Activated CD4-positive, alpha-beta T cell treated with anti-CD3 and anti-CD28 coated beads, Interleukin-2, amount 10 ng/mL, durations not matched to agents 24 days and 14 days (primary cell): ENCODE measurements at regions of chr1 and their contacts with region 1.

Region 1: GRCh38 chr1:24970399-24970753 is 40.3 kb upstream of the RUNX3 start:
- DNase-seq: no peak
- H3K4me3 Mint-ChIP-seq: peak overlapping the region; percentile 30
- H3K27ac Mint-ChIP-seq: peak overlapping the region; percentile 68
- H3K4me1 Mint-ChIP-seq: peaks cover 74% of the 10 kb centered on the region
- H3K27me3 Mint-ChIP-seq: no peaks in the 10 kb centered on the region

Region 2: DNA sequence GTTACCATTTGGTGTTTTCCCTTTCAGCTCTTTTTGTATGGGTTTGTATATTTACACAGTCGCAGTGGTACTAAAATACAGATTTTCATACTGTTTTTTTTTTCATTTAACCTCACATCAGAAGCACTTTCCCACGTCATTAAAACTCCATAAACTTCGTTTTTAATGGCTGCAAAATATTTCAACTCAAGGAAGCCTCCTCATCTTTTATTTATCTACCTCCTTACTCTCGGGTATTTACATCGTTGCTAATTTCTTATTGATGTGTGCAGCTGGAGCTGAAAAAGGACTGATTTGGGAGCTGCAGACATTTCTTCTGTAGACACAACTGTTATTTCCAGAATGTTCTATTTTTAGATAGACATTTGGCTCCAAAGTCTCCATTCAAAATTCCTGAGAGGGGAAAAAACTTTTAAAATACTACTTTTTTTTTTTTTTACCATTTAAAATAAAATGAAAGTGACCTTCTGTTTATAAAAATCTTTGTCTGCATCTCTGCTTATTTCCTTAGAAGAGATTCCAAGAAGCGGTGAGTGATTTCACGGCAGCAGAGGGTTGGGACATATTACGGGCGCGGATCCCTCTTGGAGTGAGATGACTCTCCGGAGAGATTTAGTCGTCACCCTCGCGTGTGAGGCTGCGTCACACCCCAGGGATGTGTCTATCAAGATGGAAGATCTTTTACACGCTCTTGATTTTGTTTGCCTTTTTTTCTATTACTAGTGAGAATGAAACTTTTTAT is 50.4 kb before region 1 on chr1:
- intact Hi-C with region 1: no loop called
- DNase-seq: no peak
- H3K4me3 Mint-ChIP-seq: no peak overlapping the region
- H3K27ac Mint-ChIP-seq: peak overlapping the region; percentile 60
- H3K4me1 Mint-ChIP-seq: peaks cover 40% of the 10 kb centered on the region
- H3K27me3 Mint-ChIP-seq: no peaks in the 10 kb centered on the region

Region 3: DNA sequence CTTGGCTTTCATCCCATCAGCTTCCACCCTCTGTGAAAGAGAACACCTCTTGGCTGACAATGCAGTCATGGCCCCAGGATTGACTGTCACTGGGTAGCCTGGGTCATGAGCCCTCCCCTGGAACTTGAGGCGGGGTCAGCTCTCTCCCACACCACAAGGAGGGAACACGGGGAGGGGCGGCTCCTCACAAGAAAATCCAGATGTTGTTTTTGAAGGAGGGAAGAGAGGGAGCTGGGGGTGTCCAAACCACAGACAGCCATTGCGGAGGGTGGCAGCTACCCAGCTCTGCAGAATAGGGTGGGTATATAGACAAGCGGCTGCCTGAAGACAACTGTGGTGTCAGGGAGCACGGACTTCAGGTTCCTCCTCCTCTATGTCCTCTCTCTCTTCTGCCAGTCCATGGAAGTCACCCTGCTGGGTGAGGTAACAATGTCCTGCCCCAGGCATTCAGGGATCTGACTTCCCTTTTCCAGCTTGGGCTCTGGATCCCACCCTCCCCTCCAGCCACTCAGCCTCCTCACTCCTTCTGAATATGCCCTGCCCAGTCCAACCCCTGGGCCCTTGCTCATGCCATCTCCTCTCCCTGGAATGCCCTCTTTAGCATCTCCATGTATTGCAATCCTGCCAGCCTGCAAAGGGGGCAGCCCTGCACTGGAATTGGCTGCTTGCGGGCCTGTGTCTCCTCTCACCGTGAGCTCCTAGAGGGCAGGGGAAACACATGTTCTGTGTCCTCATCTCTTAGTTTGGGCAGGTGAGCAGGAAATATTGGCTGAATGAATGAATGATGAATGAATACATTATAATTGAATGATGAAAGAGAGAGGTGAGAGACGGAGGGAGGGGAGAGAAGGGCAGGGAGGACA is 20.6 kb after region 1 on chr1:
- intact Hi-C with region 1: loop called (anchors 2 kb)
- DNase-seq: no peak
- H3K4me3 Mint-ChIP-seq: peak overlapping the region; percentile 83
- H3K27ac Mint-ChIP-seq: peak overlapping the region; percentile 100
- H3K4me1 Mint-ChIP-seq: peaks cover 80% of the 10 kb centered on the region
- H3K27me3 Mint-ChIP-seq: no peaks in the 10 kb centered on the region

Region 4: GRCh38 chr1:25182629-25183028 is 212.3 kb after region 1 on chr1:
- intact Hi-C with region 1: no loop called
- DNase-seq: no peak
- H3K4me3 Mint-ChIP-seq: no peak overlapping the region
- H3K27ac Mint-ChIP-seq: no peak overlapping the region
- H3K4me1 Mint-ChIP-seq: no peaks in the 10 kb centered on the region
- H3K27me3 Mint-ChIP-seq: peaks cover 14% of the 10 kb centered on the region